ENCODE measurements at regions of chr2 and their contacts with region 1.

Region 1: DNA sequence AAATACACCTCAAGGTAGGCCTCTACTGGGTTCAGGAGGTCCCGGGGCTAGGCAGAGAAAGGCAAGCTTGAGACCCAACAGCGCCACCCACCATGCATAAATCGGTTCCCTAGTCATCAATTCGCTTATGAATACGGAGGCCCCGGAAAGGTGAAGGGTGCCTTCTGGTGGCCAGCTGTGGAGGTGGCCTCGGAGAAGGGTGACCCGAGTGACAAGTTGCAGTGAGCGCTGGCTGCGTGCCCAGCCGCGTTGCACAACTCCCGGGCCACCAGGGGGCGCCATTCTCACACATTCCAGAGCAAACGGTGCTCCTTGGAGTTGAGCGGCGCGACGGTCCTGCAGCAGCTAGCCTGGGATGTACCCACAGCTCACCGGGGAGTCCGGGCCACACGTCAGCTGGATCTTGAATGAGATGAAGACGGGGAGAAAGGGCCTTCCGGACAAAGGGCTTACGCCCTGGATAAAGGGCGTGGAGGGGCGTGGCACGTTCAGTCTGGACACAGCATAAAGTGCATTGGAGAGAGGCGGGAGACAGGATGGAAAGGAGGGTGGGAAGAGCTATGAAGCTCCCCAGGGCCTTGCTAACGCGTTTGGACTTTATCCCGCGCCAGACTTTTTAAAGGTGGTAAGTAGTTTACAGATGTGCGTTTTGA is 20.4 kb downstream of the TMSB10 start:
- DNase-seq: peak; percentile 95 to 97 (median 96)
- H3K4me3 ChIP-seq: peak overlapping the region in 6 of 7 experiments; percentile 52 to 83 (median 68)
- H3K27ac ChIP-seq: no peak overlapping the region
- H3K4me1 ChIP-seq: peaks cover 0 to 29% (median 21%) of the 10 kb centered on the region in 4 experiments
- H3K27me3 ChIP-seq: no peaks in the 10 kb centered on the region

Region 2: GRCh38 chr2:84881581-84882414 is 44.1 kb before region 1 on chr2:
- CTCF ChIA-PET with region 1: interaction called, 20 read pairs
- POLR2A ChIA-PET with region 1: no interaction called
- DNase-seq: peak; percentile 83 to 87 (median 87)
- H3K4me3 ChIP-seq: peak overlapping the region; percentile 16 to 86 (median 63)
- H3K27ac ChIP-seq: no peak overlapping the region
- H3K4me1 ChIP-seq: peaks cover 16 to 30% (median 28%) of the 10 kb centered on the region in 4 experiments
- H3K27me3 ChIP-seq: peaks cover 0 to 55% (median 34%) of the 10 kb centered on the region in 5 experiments

Region 3: GRCh38 chr2:84894758-84895520 is 30.9 kb before region 1 on chr2:
- CTCF ChIA-PET with region 1: interaction called, 20 read pairs
- POLR2A ChIA-PET with region 1: no interaction called
- DNase-seq: peak in 2 of 3 donors; percentile 55 to 71
- H3K4me3 ChIP-seq: peak overlapping the region in 3 of 7 experiments; percentile 19 to 40 (median 22)
- H3K27ac ChIP-seq: no peak overlapping the region
- H3K4me1 ChIP-seq: peaks cover 6 to 42% (median 34%) of the 10 kb centered on the region in 4 experiments
- H3K27me3 ChIP-seq: no peaks in the 10 kb centered on the region

Region 4: DNA sequence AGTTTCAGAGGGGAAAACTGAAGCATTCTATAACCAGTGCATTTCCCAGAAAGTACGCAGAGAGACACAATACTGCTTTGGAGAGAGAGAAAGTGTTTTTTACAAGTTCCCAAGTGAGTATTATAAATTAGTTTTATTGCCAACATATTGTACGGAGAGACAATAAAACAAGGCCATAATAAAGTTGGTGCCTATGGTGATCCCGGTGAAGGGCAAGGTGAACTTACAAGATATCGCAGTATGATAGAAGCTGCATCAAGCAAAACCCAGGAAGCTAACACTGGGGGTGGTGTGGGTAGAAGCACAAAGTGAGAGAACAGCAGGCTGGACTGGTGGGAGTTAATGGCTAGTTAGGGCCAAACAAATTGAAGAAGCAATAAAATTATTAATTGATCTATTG is 12.9 kb before region 1 on chr2:
- CTCF ChIA-PET with region 1: interaction called, 42 read pairs
- POLR2A ChIA-PET with region 1: no interaction called
- DNase-seq: no peak
- H3K4me3 ChIP-seq: no peak overlapping the region
- H3K27ac ChIP-seq: no peak overlapping the region
- H3K4me1 ChIP-seq: peaks cover 0 to 12% (median 8%) of the 10 kb centered on the region in 4 experiments
- H3K27me3 ChIP-seq: no peaks in the 10 kb centered on the region

Region 5: GRCh38 chr2:84946204-84947009 is 20.6 kb after region 1 on chr2:
- CTCF ChIA-PET with region 1: interaction called, 31 read pairs
- POLR2A ChIA-PET with region 1: interaction called, 4 read pairs
- DNase-seq: peak; percentile 59 to 89 (median 82)
- H3K4me3 ChIP-seq: peak overlapping the region in 4 of 7 experiments; percentile 2 to 60 (median 29)
- H3K27ac ChIP-seq: peak overlapping the region; percentile 51 to 69
- H3K4me1 ChIP-seq: peaks cover 6 to 25% (median 21%) of the 10 kb centered on the region in 4 experiments
- H3K27me3 ChIP-seq: no peaks in the 10 kb centered on the region

Region 6: DNA sequence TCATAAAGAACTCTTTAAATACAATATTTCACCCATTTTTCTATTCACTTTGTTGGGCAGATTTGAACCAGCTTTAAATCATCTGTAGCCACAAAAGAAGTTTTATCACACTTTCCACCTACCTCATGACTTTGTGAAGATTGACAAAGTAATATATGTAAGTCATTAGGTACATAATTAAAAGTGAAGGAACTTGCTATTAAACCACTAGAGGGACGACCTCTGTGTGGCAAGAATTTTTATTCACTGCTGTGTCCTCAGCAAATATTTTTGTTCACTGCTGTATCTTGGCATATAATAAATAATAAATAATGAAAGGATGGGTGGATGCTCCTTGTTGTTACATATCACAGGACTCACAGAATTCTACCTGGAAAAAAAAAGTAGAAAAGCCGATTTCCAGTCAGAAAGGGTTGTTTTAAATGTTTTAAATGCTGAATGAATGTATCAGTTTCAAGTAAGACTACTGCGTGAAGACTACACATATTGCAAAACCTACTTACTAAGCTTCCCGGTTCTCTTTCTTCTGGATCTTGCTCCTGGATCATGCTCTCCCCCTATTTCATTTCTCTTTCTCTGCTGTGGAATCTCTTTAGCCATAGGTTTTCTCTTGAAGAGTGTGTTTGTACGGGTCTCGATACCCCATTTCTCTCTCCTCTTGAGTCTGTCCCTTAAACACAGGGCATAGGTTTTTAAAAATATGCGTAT is 90.0 kb after region 1 on chr2:
- CTCF ChIA-PET with region 1: interaction called, 32 read pairs
- POLR2A ChIA-PET with region 1: interaction called, 3 read pairs
- DNase-seq: peak in 2 of 3 donors; percentile 53 to 56
- H3K4me3 ChIP-seq: peak overlapping the region in 2 of 7 experiments; percentile 4 to 33
- H3K27ac ChIP-seq: peak overlapping the region in 1 of 2 experiments; percentile 51
- H3K4me1 ChIP-seq: peaks cover 12 to 53% (median 42%) of the 10 kb centered on the region in 4 experiments
- H3K27me3 ChIP-seq: no peaks in the 10 kb centered on the region